AG04450 (cell line): ENCODE measurements at regions of chrX and their contacts with region 1.

Region 1: GRCh38 chrX:37745354-37745753 is 34.5 kb upstream of the CYBB start:
- DNase-seq: peak; percentile 18
- H3K4me3 ChIP-seq: no peak overlapping the region
- H3K27ac ChIP-seq: no peak overlapping the region
- H3K27me3 ChIP-seq: no peaks in the 10 kb centered on the region
- CTCF ChIP-seq: peak; percentile 80

Region 2: GRCh38 chrX:37825209-37825842 is 80.0 kb after region 1 on chrX:
- CTCF ChIA-PET with region 1: interaction called, 50 read pairs
- POLR2A ChIA-PET with region 1: no interaction called
- DNase-seq: no peak
- H3K4me3 ChIP-seq: no peak overlapping the region
- H3K27ac ChIP-seq: no peak overlapping the region
- H3K27me3 ChIP-seq: no peaks in the 10 kb centered on the region
- CTCF ChIP-seq: peak; percentile 86

Region 3: GRCh38 chrX:37905436-37906147 is 160.2 kb after region 1 on chrX:
- CTCF ChIA-PET with region 1: interaction called, 11 read pairs
- POLR2A ChIA-PET with region 1: no interaction called
- DNase-seq: no peak
- H3K4me3 ChIP-seq: peak overlapping the region; percentile 54
- H3K27ac ChIP-seq: no peak overlapping the region
- H3K27me3 ChIP-seq: no peaks in the 10 kb centered on the region
- CTCF ChIP-seq: peak; percentile 33

Region 4: GRCh38 chrX:38166478-38167083 is 421.2 kb after region 1 on chrX:
- CTCF ChIA-PET with region 1: interaction called, 38 read pairs
- POLR2A ChIA-PET with region 1: no interaction called
- DNase-seq: no peak
- H3K4me3 ChIP-seq: no peak overlapping the region
- H3K27ac ChIP-seq: no peak overlapping the region
- H3K27me3 ChIP-seq: no peaks in the 10 kb centered on the region
- CTCF ChIP-seq: peak; percentile 44

Region 5: GRCh38 chrX:38175140-38175539 is 429.8 kb after region 1 on chrX:
- CTCF ChIA-PET with region 1: interaction called, 28 read pairs
- POLR2A ChIA-PET with region 1: no interaction called
- DNase-seq: no peak
- H3K4me3 ChIP-seq: no peak overlapping the region
- H3K27ac ChIP-seq: no peak overlapping the region
- H3K27me3 ChIP-seq: no peaks in the 10 kb centered on the region
- CTCF ChIP-seq: peak; percentile 53

Region 6: DNA sequence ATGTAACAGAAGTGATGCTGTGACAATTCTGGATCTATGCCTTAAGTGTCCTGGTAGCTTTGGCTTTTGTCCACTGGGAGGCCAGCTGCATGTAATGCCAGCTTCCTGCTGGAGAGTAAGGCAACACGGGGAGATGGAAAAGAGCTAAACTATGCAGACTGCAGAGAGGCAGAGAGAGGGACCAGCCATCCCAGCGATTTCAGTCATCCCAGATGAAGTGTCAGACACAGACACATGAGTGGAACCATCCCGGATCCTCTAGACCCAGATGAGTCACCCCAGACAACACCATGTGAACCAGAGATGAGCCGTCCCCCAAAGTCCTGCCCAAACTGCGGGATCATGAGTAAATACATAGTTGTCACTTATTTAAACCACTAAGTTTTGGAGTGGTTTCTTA is 460.7 kb after region 1 on chrX:
- CTCF ChIA-PET with region 1: no interaction called
- POLR2A ChIA-PET with region 1: no interaction called
- DNase-seq: no peak
- H3K4me3 ChIP-seq: no peak overlapping the region
- H3K27ac ChIP-seq: no peak overlapping the region
- H3K27me3 ChIP-seq: no peaks in the 10 kb centered on the region
- CTCF ChIP-seq: no peak

Region 7: DNA sequence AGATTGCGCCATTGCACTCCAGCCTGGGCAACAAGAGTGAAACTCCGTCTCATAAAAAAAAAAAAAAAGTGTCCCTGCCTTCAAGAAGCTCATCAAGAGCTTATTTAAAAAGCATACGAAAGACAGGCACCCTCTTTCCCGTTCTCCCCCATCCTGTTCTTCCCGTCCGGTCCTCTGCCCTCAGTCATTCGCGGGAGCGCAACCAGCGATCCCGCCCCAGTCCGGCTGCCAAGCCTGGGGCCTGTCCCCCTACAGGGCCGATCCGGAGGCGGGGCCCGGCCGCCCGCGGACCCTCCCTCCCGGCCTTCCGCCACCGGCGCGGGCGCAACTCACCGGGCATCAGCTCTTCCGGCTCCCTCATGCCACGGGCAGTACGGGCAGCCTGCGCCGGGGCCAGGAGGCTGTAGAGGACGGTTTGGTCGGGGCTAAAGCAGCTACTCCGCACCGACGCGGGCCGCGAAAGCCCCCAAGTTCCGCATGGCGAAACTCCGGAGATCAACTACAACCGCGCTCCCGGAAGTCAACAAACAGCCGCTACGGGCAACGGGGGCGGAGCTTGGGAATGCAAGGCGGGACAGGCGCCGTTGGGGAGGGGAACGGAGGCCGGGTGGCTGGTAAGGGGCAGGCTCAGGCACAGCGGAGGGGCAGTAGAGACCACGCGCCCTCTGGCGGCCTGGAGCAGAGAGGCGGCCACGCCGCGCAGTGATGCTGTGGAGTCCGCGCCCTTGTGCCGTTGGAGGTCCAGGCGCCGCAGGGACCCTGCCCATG is 581.8 kb after region 1 on chrX and contains the start of gene RPGR:
- CTCF ChIA-PET with region 1: interaction called, 10 read pairs
- POLR2A ChIA-PET with region 1: no interaction called
- DNase-seq: peak; percentile 70
- H3K4me3 ChIP-seq: peak within 1 kb of the TSS; percentile 74
- H3K27ac ChIP-seq: peak within 1 kb of the TSS; percentile 87
- H3K27me3 ChIP-seq: no peaks in the 10 kb centered on the region
- CTCF ChIP-seq: peak; percentile 77
- polyA plus RNA-seq, gene RPGR: 1.3 and 2.0 TPM in 2 replicates